Activated naive CD4-positive, alpha-beta T cell treated with anti-CD3 and anti-CD28 coated beads, Interleukin-2, amount 10 ng/mL, durations not matched to agents 7 days and 5 days (primary cell): ENCODE measurements at regions of chr14 and their contacts with region 1.

Region 1: GRCh38 chr14:76710056-76711010 is 50.9 kb upstream of the VASH1 start:
- DNase-seq: peak; percentile 44
- H3K4me3 Mint-ChIP-seq: no peak overlapping the region
- H3K27ac Mint-ChIP-seq: peak overlapping the region; percentile 58
- H3K4me1 Mint-ChIP-seq: no peaks in the 10 kb centered on the region
- H3K27me3 Mint-ChIP-seq: peaks cover 14% of the 10 kb centered on the region

Region 2: GRCh38 chr14:76546426-76547221 is 163.7 kb before region 1 on chr14:
- CTCF ChIA-PET with region 1: no interaction called
- DNase-seq: no peak
- H3K4me3 Mint-ChIP-seq: no peak overlapping the region
- H3K27ac Mint-ChIP-seq: no peak overlapping the region
- H3K4me1 Mint-ChIP-seq: no peaks in the 10 kb centered on the region
- H3K27me3 Mint-ChIP-seq: peaks cover 3% of the 10 kb centered on the region

Region 3: GRCh38 chr14:76806446-76806845 is 96.1 kb after region 1 on chr14:
- CTCF ChIA-PET with region 1: interaction called, 88 read pairs
- DNase-seq: no peak
- H3K4me3 Mint-ChIP-seq: no peak overlapping the region
- H3K27ac Mint-ChIP-seq: no peak overlapping the region
- H3K4me1 Mint-ChIP-seq: peaks cover 11% of the 10 kb centered on the region
- H3K27me3 Mint-ChIP-seq: no peaks in the 10 kb centered on the region

Region 4: DNA sequence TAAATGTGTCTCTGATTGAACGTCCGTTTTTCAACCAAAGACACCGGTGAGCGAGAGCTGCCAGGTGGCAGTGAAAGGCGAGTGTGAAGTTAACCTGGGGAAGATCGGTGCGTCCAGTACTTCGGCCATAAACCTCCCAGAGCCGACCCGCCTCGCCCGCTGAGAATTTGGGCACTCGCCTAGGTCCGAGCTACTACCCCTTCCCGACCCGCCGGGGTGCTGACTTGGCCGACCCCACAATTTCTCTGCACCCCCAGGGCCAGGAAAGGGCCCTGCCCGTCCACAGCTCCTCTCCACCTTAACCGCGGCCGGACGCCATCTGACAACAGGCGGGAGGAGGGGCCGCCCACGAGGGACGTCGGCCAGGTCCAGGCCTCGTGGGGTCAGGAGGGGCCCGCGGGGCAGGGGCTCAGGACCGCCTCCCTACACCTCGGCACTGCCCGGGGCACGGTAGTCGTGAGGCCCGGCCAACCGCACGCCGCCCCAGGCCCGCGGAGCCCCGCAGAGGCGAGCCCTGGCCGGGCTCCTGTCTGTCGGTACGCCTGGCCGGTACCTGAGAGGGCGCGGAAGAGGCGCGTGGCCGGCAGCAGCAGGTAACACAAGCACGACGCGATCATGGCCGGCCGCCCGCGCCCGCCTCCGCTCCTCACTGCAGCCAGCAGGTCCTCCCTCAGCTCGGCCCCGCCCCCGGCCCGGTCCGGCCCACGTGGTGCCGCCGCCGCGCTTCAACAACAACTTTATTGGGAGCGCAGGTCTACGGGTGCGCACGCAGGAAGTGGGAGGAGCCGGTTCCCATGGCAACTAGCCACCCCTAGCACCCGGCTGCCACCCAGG is 102.1 kb after region 1 on chr14 and contains the start of gene ANGEL1:
- CTCF ChIA-PET with region 1: interaction called, 88 read pairs
- DNase-seq: peak; percentile 98
- H3K4me3 Mint-ChIP-seq: peak within 1 kb of the TSS; percentile 90
- H3K27ac Mint-ChIP-seq: peak within 1 kb of the TSS; percentile 81
- H3K4me1 Mint-ChIP-seq: peaks cover 21% of the 10 kb centered on the region
- H3K27me3 Mint-ChIP-seq: no peaks in the 10 kb centered on the region